BJ (cell line): ENCODE measurements at regions of chr1 and their contacts with region 1.

Region 1: DNA sequence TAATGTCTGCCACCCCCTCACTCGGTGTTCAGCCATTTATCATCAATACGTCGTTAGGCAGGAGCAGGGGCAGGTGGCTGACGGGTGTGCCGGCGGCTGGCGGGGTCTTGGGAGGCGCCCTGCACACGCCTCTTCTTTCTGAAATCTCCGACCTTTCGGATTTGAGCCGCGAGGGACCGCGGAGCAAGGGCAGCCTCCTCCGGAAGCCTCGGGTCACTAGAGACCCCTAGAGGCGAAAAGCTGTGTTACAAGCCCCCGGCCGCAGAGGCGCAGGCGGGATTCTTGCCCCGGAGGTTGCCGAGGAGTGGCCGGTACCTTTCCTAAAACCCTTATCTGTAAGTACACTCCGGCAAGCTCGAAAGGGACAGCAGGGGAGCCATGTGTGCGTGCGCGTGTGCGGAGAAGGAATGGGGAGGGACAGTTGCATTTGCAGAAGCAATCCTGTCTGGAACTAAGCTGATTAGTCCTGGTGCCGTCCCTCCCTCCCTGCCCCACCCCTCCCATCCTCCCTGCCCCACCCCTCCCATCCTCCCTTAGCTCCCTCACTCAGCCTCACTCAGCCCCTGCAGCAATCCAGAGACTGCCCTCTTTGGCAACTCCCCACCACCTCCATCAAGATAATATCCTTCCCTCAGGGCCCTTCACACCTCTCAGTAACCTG is 11.0 kb downstream of the BRINP2 start:
- DNase-seq: no peak
- H3K4me3 ChIP-seq: peak overlapping the region; percentile 26
- H3K27me3 ChIP-seq: peaks cover 13% of the 10 kb centered on the region
- CTCF ChIP-seq: peak; percentile 92

Region 2: DNA sequence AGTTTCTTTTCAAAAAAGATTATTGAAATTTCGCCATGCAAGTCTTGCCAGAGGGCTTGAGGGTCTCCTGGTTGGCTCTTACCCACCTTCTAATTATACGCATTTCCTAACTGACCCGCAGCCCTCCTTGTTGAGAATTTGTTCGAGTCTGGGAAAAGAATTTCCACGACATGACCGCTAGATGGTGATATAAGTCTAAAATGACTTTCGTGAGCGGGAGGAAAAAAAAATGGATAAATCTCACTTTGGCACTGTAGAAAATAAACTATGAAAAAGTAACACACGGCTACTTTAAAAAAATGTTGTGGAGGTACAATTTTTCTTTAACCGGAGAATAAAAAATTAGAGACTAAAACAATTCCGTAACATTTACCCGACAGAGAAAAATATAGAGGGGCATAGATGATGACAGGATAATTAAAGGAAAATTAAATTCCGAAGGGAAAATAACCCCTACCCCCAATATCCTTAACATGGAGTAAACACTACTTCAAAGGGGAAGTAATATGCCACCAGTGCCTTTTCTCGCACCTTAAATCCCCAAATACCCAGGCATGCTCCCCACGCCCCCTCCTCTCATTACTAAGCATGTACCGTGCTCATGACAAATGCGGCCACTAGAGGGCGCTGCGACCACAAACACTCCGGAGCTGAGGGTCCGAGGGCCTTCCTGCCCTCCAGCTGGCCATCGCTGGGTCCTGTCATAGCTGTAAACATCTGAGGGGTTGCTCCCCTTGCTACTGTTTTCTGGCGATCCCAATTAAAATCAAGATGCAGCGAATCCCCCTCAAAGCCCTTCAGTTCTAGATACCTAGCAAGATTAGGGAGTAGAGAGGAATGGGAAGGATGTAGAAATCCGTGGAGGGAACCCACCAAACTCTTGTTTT is 284.2 kb before region 1 on chr1:
- CTCF ChIA-PET with region 1: interaction called, 71 read pairs
- POLR2A ChIA-PET with region 1: interaction called, 3 read pairs
- DNase-seq: no peak
- H3K4me3 ChIP-seq: no peak overlapping the region
- H3K27me3 ChIP-seq: peaks cover 4% of the 10 kb centered on the region; the same call in 1 of the 2 replicates
- CTCF ChIP-seq: peak; percentile 96

Region 3: DNA sequence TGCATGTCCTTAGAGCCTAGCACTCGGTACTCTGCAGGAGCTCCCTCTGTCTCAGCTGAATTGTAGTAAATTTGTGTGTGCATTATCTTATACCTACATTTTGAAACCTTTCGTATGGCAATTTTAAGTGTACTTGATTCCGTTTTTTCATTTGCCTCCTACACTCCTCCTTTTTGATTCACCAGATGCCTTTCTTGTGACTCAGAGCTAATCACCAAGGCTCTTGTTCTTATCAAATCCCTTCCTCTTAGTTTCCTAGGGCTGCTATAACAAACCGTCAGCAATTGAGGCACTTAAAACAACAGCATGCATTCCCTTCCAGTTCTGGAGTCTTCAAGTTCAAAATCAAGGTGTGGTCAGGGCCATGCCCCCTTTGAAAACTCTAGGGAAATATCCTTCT is 278.3 kb before region 1 on chr1:
- CTCF ChIA-PET with region 1: interaction called, 71 read pairs
- POLR2A ChIA-PET with region 1: no interaction called
- DNase-seq: no peak
- H3K4me3 ChIP-seq: no peak overlapping the region
- H3K27me3 ChIP-seq: peaks cover 7% of the 10 kb centered on the region
- CTCF ChIP-seq: no peak

Region 4: GRCh38 chr1:177170756-177171535 is 10.8 kb before region 1 on chr1 and contains the start of gene BRINP2:
- CTCF ChIA-PET with region 1: interaction called, 25 read pairs
- POLR2A ChIA-PET with region 1: no interaction called
- DNase-seq: no peak
- H3K4me3 ChIP-seq: peak within 1 kb of the TSS; percentile 36
- H3K27me3 ChIP-seq: peaks cover 31% of the 10 kb centered on the region
- CTCF ChIP-seq: no peak
- polyA plus RNA-seq, gene BRINP2: 0.02 TPM in 1 of 2 replicates, not detected in the other